Psoas muscle (tissue), 8 donors: ENCODE measurements at regions of chr6 and their contacts with region 1.

Region 1: DNA sequence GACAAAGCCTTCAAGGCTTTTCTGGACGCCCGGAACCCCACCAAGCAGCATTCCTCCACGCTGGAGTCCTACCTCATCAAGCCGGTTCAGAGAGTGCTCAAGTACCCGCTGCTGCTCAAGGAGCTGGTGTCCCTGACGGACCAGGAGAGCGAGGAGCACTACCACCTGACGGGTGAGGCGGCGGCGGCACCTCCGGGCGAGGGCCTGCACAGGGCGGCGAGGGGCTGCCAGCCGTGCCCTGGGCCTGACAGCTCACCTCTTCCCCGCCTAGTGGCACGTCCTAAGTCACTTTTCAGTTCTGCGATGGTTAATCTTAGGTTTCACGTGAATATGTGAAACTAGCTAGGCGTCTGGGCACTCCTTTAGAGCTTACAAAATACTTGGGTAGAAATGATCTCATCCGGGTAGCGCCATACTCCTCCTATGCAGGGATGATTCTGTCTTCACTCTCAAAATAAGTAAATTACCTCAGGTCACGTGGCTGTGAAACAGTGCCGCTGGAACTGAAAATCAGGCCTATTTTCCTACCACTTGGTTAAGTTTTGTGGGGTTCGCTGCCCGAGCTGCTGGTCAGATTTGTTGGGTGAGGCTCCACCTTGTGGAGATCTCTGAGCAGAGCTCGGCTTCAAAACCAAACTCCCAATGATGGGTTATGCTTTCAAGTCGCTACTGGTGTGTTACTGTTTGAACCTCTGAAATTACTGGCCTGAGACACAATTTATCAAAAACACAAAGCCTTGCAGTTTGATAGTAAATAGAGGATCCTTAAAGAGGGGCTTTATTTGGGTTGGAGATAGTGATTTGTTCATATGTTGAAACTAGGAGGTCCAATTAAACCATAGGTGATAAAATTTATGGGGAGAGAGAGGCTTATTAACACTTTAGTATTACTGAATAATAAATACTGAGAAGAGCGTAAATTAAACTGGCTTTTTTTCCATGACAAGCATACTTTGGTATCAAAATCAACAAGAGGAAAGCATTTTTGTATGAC is 15.5 kb upstream of the CLDN20 start:
- DNase-seq: peak in 1 of 2 donors; percentile 23
- ATAC-seq: peak in 3 of 4 donors; percentile 42 to 66 (median 50)
- H3K4me3 ChIP-seq: no peak overlapping the region
- H3K27ac ChIP-seq: no peak overlapping the region
- H3K4me1 ChIP-seq: peaks cover 6% of the 10 kb centered on the region
- H3K27me3 ChIP-seq: no peaks in the 10 kb centered on the region
- CTCF ChIP-seq: peak; percentile 58

Region 2: DNA sequence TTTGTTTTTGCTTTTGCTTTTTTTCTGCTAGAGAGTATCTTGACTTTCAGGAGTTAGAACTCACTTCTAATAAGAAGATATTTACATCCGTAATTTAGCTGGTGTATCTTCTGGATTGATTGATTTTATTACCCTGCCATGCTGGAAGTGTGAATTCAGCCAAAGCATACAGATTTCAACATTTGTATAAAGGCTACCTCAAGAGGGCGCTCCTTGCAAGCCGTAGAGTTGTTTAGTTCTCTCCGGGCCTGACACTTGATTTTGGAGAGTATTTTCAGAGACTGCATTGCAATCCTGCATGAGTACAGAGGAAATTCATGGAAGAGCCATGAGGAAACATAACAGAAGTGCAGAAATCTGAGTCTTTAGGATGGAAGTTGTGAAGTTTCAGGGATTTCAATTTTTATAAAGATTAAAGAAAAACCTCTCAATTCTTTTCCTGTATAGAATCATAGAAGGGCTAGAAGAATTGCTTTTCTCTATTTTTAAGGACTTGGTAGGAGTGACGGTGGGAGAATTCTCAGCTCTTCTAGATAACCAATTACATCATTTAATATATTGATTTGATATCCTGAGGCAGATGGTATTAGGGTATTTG is 319.9 kb before region 1 on chr6:
- intact Hi-C with region 1: loop called (anchors 10 kb)
- DNase-seq: no peak
- ATAC-seq: peak; percentile 43 to 79 (median 68)
- H3K4me3 ChIP-seq: no peak overlapping the region
- H3K27ac ChIP-seq: no peak overlapping the region
- H3K4me1 ChIP-seq: peaks cover 7% of the 10 kb centered on the region
- H3K27me3 ChIP-seq: no peaks in the 10 kb centered on the region
- CTCF ChIP-seq: peak; percentile 71